ENCODE measurements at regions of chr1 and their contacts with region 1.

Region 1: GRCh38 chr1:200620273-200621131 is at the start of gene KIF14:
- DNase-seq: peak; percentile 81 to 91
- H3K4me3 ChIP-seq: peak within 1 kb of the TSS; percentile 69
- H3K27ac ChIP-seq: peak within 1 kb of the TSS; percentile 53
- H3K4me1 ChIP-seq: peaks cover 17% of the 10 kb centered on the region
- H3K27me3 ChIP-seq: no peaks in the 10 kb centered on the region
- CTCF ChIP-seq: no peak
- total RNA-seq, gene KIF14: 22.8 and 30.0 TPM in 2 replicates

Region 2: GRCh38 chr1:200669314-200670241 is 49.1 kb after region 1 on chr1 and contains the start of gene DDX59:
- CTCF ChIA-PET with region 1: interaction called, 6 read pairs
- POLR2A ChIA-PET with region 1: interaction called, 7 read pairs
- intact Hi-C with region 1: loop called (anchors 1 kb)
- DNase-seq: peak; percentile 83 to 95
- H3K4me3 ChIP-seq: peak within 1 kb of the TSS; percentile 75
- H3K27ac ChIP-seq: peak within 1 kb of the TSS; percentile 96
- H3K4me1 ChIP-seq: peaks cover 23% of the 10 kb centered on the region
- H3K27me3 ChIP-seq: no peaks in the 10 kb centered on the region
- CTCF ChIP-seq: no peak
- total RNA-seq, gene DDX59: 32.9 and 35.9 TPM in 2 replicates

Region 3: DNA sequence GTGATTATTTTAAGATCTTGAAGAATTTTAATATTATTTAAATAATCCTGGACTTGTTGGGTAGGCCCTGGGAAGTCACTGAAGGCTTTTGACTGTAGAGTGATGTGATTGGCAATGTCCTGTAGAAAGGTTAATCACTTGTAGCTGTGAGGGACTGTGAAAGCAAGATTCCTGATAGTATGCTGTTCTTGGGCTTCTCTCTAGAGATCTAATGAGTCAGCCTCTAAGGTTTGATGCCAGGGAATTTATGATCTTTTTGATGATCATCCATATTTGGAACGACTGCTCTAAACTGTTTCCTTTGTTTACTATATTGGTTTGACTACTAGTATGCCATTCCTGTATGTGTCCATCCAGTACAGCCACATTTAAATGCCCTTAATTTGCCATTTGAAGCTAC is 174.7 kb after region 1 on chr1:
- CTCF ChIA-PET with region 1: interaction called, 7 read pairs
- POLR2A ChIA-PET with region 1: interaction called, 10 read pairs
- intact Hi-C with region 1: no loop called
- DNase-seq: no peak
- H3K4me3 ChIP-seq: no peak overlapping the region
- H3K27ac ChIP-seq: no peak overlapping the region
- H3K4me1 ChIP-seq: no peaks in the 10 kb centered on the region
- H3K27me3 ChIP-seq: no peaks in the 10 kb centered on the region
- CTCF ChIP-seq: no peak

Region 4: DNA sequence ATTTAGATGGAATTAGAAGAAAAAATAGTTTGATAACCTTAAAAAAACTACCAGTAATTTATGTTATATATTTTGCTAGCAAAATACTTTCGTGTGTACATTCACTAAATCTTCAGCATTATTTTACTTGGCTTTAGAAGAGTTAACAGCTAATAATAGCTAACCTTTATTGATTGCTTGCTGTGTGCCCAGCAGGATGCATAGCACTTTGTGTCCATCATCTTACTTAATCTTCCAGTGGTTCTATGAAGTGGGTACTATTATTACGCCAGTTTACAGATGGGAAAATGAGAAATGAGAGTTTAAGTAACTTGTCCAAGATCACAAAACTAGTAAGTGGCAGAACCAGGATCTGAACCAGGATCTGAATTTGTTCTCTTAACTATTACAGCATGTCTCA is 210.6 kb after region 1 on chr1:
- CTCF ChIA-PET with region 1: no interaction called
- POLR2A ChIA-PET with region 1: no interaction called
- intact Hi-C with region 1: no loop called
- DNase-seq: no peak
- H3K4me3 ChIP-seq: no peak overlapping the region
- H3K27ac ChIP-seq: no peak overlapping the region
- H3K4me1 ChIP-seq: no peaks in the 10 kb centered on the region
- H3K27me3 ChIP-seq: no peaks in the 10 kb centered on the region
- CTCF ChIP-seq: no peak

Region 5: GRCh38 chr1:200885623-200886402 is 265.3 kb after region 1 on chr1:
- CTCF ChIA-PET with region 1: interaction called, 11 read pairs
- POLR2A ChIA-PET with region 1: no interaction called
- intact Hi-C with region 1: no loop called
- DNase-seq: peak in 1 of 2 experiments; percentile 33
- H3K4me3 ChIP-seq: no peak overlapping the region
- H3K27ac ChIP-seq: no peak overlapping the region
- H3K4me1 ChIP-seq: peaks cover 32% of the 10 kb centered on the region
- H3K27me3 ChIP-seq: no peaks in the 10 kb centered on the region
- CTCF ChIP-seq: no peak

Region 6: GRCh38 chr1:201042779-201043461 is 422.4 kb after region 1 on chr1:
- CTCF ChIA-PET with region 1: no interaction called
- POLR2A ChIA-PET with region 1: no interaction called
- intact Hi-C with region 1: loop called (anchors 2 kb)
- DNase-seq: peak; percentile 51 to 52
- H3K4me3 ChIP-seq: no peak overlapping the region
- H3K27ac ChIP-seq: no peak overlapping the region
- H3K4me1 ChIP-seq: no peaks in the 10 kb centered on the region
- H3K27me3 ChIP-seq: peaks cover 18% of the 10 kb centered on the region
- CTCF ChIP-seq: peak; percentile 91

Region 7: GRCh38 chr1:201114236-201115131 is 494.0 kb after region 1 on chr1:
- CTCF ChIA-PET with region 1: interaction called, 3 read pairs
- POLR2A ChIA-PET with region 1: no interaction called
- intact Hi-C with region 1: loop called (anchors 1 kb)
- DNase-seq: peak; percentile 90 to 94
- H3K4me3 ChIP-seq: peak overlapping the region; percentile 60
- H3K27ac ChIP-seq: no peak overlapping the region
- H3K4me1 ChIP-seq: no peaks in the 10 kb centered on the region; the same call in 1 of the 2 replicates
- H3K27me3 ChIP-seq: no peaks in the 10 kb centered on the region; the same call in 1 of the 2 replicates
- CTCF ChIP-seq: peak; percentile 88